ENCODE measurements at regions of chr17 and their contacts with region 1.

Region 1: GRCh38 chr17:70144260-70144846 is 25.0 kb upstream of the KCNJ2 start:
- DNase-seq: peak; percentile 15
- ATAC-seq: no peak
- H3K4me3 ChIP-seq: no peak overlapping the region
- H3K27ac ChIP-seq: no peak overlapping the region
- H3K4me1 ChIP-seq: no peaks in the 10 kb centered on the region
- H3K27me3 ChIP-seq: no peaks in the 10 kb centered on the region; a peak in 1 of 5 replicates
- CTCF ChIP-seq: peak; percentile 64
- EP300 ChIP-seq: no peak
- POLR2A ChIP-seq: no peak
- RAD21 ChIP-seq: no peak

Region 2: DNA sequence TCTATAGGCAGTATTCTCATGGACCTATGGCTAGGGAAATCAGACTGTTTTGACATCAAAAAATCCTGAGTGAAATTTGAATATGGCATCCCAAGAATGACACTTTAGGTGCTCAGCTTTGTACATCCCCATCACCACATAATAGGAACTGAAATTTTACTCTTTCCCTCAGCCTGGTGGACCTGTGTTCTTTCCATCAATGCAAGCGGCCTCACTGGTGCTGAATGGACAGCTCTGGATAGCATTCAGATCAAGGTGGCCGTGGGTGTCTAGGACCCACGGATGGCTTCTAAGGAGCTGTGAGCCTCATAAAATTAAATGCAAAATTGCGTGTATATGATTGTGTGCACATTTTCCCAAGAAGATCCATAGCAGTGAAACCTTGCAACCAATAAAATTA is 577.2 kb before region 1 on chr17:
- CTCF ChIA-PET with region 1: interaction called, 31 read pairs
- POLR2A ChIA-PET with region 1: no interaction called
- in situ Hi-C with region 1: loop called (anchors 5 kb)
- intact Hi-C with region 1: loop called (anchors 1 kb)
- DNase-seq: no peak
- ATAC-seq: no peak
- H3K4me3 ChIP-seq: no peak overlapping the region
- H3K27ac ChIP-seq: no peak overlapping the region
- H3K4me1 ChIP-seq: no peaks in the 10 kb centered on the region
- H3K27me3 ChIP-seq: no peaks in the 10 kb centered on the region
- CTCF ChIP-seq: no peak
- EP300 ChIP-seq: no peak
- POLR2A ChIP-seq: no peak
- RAD21 ChIP-seq: no peak

Region 3: DNA sequence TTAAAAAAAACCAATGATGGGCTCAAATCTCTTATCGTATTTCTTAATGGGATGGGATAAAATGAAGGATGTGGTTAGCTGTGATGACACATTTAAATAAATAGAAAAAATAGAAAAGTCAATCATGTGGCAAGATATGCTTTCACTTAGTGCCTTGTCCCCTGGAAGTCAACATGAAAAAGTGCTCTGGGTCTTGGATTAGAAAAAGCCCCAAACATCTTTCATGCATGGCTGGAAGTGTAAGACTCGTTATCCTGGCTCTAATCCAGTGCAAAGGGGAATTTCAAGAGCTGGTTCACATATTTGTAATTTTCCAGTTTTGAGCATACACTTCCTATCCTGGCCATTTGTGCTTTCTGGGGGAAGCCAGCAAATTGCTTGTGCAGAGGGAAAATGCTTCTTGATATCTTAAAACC is 569.0 kb before region 1 on chr17:
- CTCF ChIA-PET with region 1: interaction called, 31 read pairs
- POLR2A ChIA-PET with region 1: no interaction called
- in situ Hi-C with region 1: no loop called
- intact Hi-C with region 1: no loop called
- DNase-seq: no peak
- ATAC-seq: no peak
- H3K4me3 ChIP-seq: no peak overlapping the region
- H3K27ac ChIP-seq: no peak overlapping the region
- H3K4me1 ChIP-seq: no peaks in the 10 kb centered on the region
- H3K27me3 ChIP-seq: peaks cover 0 to 2% of the 10 kb centered on the region in 2 experiments; a peak in 2 of 5 replicates
- CTCF ChIP-seq: no peak
- EP300 ChIP-seq: no peak
- POLR2A ChIP-seq: no peak
- RAD21 ChIP-seq: no peak

Region 4: DNA sequence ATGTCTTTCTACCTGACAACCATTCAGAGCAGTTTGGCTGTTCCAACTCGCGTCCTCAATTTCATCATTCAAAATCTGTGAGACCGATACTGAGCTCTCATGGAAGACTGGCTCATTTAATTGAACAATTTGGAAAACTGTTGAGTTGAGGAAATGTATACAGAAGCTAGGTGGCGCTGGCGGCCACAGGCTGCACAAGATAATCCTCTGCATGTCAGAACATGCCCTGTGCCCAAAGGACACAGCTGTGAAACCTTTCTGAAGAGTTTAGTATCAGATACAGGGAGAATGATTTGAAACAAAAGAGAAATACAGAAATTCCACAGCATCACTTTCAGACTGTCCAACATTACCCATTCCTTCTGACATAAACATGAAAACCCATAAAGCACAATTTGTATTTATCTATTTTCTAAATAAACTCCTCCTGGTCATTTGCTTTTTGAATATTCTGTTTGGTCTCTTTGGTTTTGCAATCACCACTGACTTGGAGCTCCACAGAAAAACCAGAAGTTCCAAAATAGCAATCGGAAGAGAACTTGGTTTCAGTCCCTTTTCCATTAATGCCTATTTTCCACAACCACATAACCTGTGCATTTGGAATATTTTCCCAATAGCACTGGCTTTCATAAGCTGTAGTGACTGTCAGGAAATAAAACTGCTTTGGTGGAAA is 537.1 kb before region 1 on chr17:
- CTCF ChIA-PET with region 1: no interaction called
- POLR2A ChIA-PET with region 1: no interaction called
- in situ Hi-C with region 1: no loop called
- intact Hi-C with region 1: loop called (anchors 1 kb)
- DNase-seq: peak; percentile 68
- ATAC-seq: peak; percentile 94
- H3K4me3 ChIP-seq: no peak overlapping the region
- H3K27ac ChIP-seq: peak overlapping the region; percentile 52
- H3K4me1 ChIP-seq: peaks cover 10% of the 10 kb centered on the region
- H3K27me3 ChIP-seq: no peaks in the 10 kb centered on the region
- CTCF ChIP-seq: peak; percentile 71
- EP300 ChIP-seq: peak in 1 of 2 experiments; percentile 30; a peak in 1 of 4 replicates
- POLR2A ChIP-seq: no peak
- RAD21 ChIP-seq: no peak

Region 5: GRCh38 chr17:70080541-70081347 is 63.6 kb before region 1 on chr17:
- CTCF ChIA-PET with region 1: no interaction called
- POLR2A ChIA-PET with region 1: no interaction called
- in situ Hi-C with region 1: no loop called
- intact Hi-C with region 1: no loop called
- DNase-seq: no peak
- ATAC-seq: no peak
- H3K4me3 ChIP-seq: no peak overlapping the region
- H3K27ac ChIP-seq: no peak overlapping the region
- H3K4me1 ChIP-seq: no peaks in the 10 kb centered on the region
- H3K27me3 ChIP-seq: no peaks in the 10 kb centered on the region
- CTCF ChIP-seq: no peak
- EP300 ChIP-seq: no peak
- POLR2A ChIP-seq: no peak
- RAD21 ChIP-seq: no peak

Region 6: GRCh38 chr17:70202840-70203239 is 58.5 kb after region 1 on chr17:
- CTCF ChIA-PET with region 1: no interaction called
- POLR2A ChIA-PET with region 1: no interaction called
- in situ Hi-C with region 1: no loop called
- intact Hi-C with region 1: no loop called
- DNase-seq: no peak
- ATAC-seq: no peak
- H3K4me3 ChIP-seq: no peak overlapping the region
- H3K27ac ChIP-seq: no peak overlapping the region
- H3K4me1 ChIP-seq: no peaks in the 10 kb centered on the region
- H3K27me3 ChIP-seq: no peaks in the 10 kb centered on the region
- CTCF ChIP-seq: no peak
- EP300 ChIP-seq: no peak
- POLR2A ChIP-seq: no peak
- RAD21 ChIP-seq: no peak

Measured in HepG2 (cell line).